ENCODE measurements at regions of chr19 and their contacts with region 1.

Region 1: GRCh38 chr19:41263850-41264580 is at the start of gene HNRNPUL1:
- DNase-seq: peak; percentile 100
- H3K4me3 ChIP-seq: peak within 1 kb of the TSS; percentile 85 to 93 (median 87)
- H3K27ac ChIP-seq: peak within 1 kb of the TSS; percentile 92
- H3K4me1 ChIP-seq: peaks cover 20% of the 10 kb centered on the region
- H3K27me3 ChIP-seq: no peaks in the 10 kb centered on the region
- CTCF ChIP-seq: peak in 1 of 2 donors; percentile 51
- total RNA-seq, gene HNRNPUL1: 80.7 to 175 TPM

Region 2: DNA sequence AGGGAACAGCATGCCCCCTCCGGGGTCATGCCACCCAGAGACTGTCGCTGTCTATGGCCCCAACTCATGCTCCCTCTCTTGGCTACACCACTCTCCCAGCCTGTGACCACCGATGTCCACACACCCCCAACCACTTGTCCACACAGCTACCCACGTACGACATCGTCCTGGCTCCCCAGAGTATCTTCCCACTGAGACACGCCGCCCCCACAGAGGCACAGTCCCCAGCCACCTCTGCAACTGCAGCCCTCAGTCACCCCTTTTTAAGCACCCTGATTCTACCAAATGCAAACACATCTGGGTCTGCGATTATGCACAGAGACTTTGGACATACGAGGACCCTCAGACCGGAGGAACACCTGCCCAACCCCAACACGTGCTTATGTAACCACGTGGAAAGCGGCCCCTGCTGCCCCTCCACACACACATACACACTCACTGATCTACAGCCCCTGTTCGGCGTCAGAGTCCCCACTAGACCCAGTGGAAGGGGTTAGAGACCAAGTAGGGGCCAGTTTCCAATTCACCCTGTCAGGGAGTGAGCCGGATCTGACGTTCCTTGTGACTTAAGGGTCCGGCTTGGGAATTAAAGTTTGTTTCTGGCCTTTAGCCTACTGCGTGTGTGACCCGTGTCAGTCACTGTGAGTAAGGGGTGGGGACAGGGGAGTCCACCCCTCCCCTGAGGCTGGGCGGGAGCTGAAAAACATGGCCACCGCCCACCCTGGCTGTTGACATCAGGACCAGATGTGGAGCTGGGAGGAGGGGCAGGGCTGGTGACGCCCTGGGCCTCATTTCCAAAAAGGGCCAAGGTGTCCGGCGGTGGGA is 56.9 kb before region 1 on chr19:
- CTCF ChIA-PET with region 1: interaction called, 6 read pairs
- dilution Hi-C with region 1: no loop called
- in situ Hi-C with region 1: loop called in 1 of 2 experiments (anchors 5 kb)
- intact Hi-C with region 1: loop called (anchors 1 kb)
- DNase-seq: no peak
- H3K4me3 ChIP-seq: no peak overlapping the region
- H3K27ac ChIP-seq: no peak overlapping the region
- H3K4me1 ChIP-seq: no peaks in the 10 kb centered on the region
- H3K27me3 ChIP-seq: no peaks in the 10 kb centered on the region
- CTCF ChIP-seq: no peak

Region 3: DNA sequence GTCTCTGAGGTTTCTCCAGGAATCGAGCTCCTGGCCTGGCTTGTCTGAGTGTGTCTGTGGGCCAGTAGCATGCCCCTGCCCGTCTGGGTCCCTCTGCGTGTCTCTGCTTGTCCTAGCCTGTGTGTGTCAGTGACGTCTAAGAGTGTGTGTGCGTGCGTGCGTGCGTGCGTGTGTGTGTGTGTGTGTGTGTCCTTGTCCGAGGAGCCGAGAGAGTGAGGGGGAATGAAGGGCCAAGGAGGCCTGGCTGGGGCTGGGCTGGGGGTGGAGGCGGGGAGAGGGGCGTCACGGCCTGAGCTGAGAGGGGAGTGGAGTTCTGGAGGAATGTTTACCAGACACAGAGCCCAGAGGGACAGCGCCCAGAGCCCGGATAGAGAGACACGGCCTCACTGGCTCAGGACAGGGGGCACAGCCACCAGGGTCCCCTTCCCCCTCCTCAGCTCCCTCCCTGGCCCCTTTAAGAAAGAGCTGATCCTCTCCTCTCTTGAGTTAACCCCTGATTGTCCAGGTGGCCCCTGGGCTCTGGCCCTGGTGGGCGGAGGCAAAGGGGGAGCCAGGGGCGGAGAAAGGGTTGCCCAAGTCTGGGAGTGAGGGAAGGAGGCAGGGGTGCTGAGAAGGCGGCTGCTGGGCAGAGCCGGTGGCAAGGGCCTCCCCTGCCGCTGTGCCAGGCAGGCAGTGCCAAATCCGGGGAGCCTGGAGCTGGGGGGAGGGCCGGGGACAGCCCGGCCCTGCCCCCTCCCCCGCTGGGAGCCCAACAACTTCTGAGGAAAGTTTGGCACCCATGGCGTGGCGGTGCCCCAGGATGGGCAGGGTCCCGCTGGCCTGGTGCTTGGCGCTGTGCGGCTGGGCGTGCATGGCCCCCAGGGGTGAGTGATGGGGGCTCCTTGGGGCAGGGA is 45.2 kb before region 1 on chr19 and contains the start of gene AXL:
- CTCF ChIA-PET with region 1: no interaction called
- dilution Hi-C with region 1: no loop called
- in situ Hi-C with region 1: loop called in 1 of 2 experiments (anchors 5 kb)
- intact Hi-C with region 1: loop called (anchors 1 kb)
- DNase-seq: peak; percentile 95
- H3K4me3 ChIP-seq: peak within 1 kb of the TSS; percentile 69 to 74 (median 72)
- H3K27ac ChIP-seq: peak within 1 kb of the TSS; percentile 92
- H3K4me1 ChIP-seq: peaks cover 44% of the 10 kb centered on the region
- H3K27me3 ChIP-seq: no peaks in the 10 kb centered on the region
- CTCF ChIP-seq: no peak
- total RNA-seq, gene AXL: 121 to 141 TPM